Right ventricle myocardium inferior (tissue), 1 donor: ENCODE measurements at regions of chr2 and their contacts with region 1.

Region 1: DNA sequence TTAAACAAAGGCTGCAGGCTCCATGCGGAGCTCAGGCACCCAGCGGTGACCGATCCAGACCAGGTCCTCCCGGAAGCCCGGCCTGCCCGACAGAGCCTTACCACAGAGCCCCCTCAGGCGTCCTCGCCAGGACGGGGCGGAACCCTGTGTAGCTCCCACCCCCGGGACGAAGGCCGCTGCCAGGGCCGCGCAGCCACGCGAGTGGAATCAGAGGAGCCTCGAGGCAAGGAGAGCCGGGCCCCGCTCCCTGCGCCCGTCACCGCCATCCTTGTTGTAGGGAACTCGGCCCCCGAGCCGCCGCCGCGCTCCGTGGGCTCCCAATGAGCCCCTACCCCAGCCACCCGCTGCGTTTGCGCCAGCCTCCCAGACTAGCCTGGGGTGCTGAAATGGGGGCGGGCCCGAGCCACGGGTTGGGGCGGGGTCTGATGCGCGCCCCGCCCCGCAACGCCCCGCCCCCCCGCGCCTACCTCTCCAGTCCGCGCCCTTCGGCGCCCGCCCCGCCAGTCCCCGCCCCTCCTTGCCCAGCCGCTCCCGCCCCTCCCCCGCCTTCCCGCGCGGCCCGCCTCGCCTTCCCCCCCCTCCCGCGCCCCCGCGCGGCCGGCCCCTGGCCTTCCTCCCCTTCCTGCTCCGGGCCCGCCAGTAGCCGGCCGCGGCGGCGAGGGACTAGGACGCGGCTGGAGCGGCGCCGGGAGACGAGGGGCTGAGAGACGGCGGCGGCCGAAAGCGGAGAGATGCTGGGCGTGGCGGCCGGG is at the start of gene LIMS1:
- DNase-seq: peak; percentile 96
- ATAC-seq: peak; percentile 97
- total RNA-seq, gene LIMS1: 84.3 TPM

Region 2: DNA sequence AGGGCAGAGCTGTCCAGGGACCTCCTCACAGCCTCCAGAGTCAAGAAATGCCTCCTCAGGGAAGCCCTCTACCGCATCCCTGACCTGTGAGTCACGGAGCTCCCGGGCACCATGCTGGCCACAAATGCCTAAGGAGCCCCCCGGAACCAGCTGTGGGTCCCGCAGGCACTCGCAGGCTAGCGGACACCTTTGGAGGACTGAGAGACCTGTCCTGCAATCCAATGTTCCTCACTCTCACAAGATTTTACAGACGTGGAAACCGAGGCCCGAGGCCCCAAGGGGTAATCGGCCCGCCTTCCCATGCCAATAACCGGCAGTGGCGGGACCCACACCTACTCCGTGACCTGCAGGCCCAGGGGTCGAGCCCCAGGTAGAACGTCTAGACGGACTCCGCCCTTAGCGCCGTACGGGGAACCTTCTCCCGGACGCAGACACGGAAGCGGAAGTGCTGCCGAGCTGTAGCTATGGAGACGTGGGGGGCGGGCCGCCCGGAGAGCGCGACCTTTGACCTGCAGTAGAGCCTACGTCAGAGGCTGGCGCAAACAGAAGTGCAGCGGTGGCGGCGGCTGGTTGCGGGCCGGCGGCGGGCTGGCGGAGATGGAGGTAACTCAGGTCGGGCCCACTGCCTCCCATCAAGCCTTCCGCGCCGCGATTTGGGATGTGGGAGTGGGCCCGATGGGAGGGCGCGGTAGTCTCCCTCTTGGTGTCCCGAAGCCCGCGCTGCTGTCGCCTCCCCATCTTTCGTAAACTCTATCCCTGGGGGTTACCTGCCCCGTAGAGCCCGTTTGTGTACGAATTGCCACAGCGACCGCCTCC is 85.1 kb before region 1 on chr2 and contains the start of gene GCC2:
- intact Hi-C with region 1: loop called (anchors 5 kb)
- DNase-seq: peak; percentile 99
- ATAC-seq: peak; percentile 98
- total RNA-seq, gene GCC2: 24.0 TPM

Region 3: GRCh38 chr2:108460345-108461037 is 73.5 kb before region 1 on chr2:
- intact Hi-C with region 1: no loop called
- DNase-seq: no peak
- ATAC-seq: no peak